ENCODE measurements at regions of chr10 and their contacts with region 1.

Region 1: DNA sequence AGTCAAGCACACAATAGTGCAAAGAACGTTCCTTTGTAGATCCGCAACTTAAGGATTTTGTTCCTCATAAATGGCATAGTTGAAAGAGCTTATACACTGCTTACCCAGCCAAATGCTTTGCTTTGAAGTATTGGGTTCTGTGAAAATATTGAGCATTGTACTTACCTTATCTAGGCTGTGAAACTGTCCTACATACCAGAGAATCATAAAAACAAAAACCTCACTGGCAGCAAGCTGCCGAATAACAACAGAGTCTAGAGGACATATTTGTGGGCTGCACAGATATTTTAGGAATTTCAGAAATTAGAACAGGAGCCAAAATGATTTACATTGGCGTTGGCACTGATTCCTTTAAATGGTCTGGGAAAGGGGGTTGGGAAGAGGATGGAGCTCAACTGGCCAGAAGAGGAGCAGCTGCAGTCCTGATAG is 174.8 kb downstream of the RTKN2 start:
- DNase-seq: no peak
- ATAC-seq: peak; percentile 18

Region 2: GRCh38 chr10:62048919-62049623 is 44.8 kb before region 1 on chr10:
- intact Hi-C with region 1: loop called (anchors 5 kb)
- DNase-seq: peak; percentile 87
- ATAC-seq: peak; percentile 75

Region 3: DNA sequence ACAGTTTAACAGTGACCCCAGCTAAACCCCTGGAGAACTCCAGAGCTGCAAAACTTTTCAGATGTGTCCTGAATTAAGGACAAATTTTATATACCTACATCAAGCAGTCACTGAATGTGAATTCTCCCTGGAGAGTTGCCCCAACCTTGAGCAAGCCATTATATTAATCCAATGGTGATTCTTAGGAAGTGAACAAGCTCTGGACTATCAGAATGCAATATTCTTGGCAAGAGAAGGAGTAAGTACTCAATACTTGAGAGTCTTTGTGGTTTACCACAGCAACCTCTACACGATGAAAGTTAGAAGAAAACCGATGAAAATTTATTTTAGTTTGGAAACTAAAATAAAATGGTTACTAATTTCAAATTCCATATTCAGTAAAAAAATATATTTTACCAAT is 261.0 kb after region 1 on chr10:
- intact Hi-C with region 1: no loop called
- DNase-seq: no peak
- ATAC-seq: no peak

Measured in Right ventricle myocardium superior (tissue), 1 donor.